Activated naive CD4-positive, alpha-beta T cell treated with anti-CD3 and anti-CD28 coated beads for 36 hours (primary cell): ENCODE measurements at regions of chr11 and their contacts with region 1.

Region 1: DNA sequence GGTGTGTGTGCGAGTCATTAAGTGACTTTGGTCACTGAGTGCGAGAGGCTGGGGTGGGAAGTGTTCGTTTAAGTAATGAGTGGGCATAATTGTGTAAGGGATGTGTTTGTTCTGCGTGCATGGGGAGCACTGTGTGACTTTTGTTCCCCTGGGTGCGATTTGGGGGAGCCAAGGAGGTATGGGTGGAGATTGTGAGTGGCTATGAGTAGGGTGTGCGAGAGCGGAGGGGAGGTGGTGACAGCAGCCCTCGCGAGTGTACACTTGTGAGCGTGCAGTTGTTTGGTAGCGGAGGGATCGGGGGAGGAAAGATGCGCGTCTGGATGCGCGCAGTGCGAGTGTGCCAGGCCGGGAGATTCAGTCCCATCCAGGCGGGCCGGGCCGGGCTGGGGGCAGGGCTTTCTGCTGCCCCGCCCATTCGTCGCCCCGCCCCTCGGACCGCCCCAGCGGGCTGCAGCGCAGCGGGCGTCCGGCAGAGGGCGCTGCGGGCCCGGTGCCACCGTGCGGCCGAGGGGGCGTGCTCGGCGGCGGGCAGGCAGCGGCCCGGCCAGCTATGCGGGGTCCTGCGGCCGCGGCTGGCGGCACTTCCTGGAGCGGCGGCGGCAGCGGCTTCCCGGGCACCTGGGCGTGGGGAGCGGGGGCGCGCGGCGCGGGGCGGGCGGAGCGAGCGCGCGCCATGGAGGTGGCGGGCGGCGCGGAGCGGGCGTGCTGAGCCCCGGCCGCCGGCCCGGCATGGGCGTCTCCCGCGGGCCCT is at the start of gene DGKZ:
- DNase-seq: peak; percentile 86
- H3K4me3 Mint-ChIP-seq: peak within 1 kb of the TSS; percentile 84
- H3K27ac Mint-ChIP-seq: peak within 1 kb of the TSS; percentile 92
- H3K4me1 Mint-ChIP-seq: peaks cover 80% of the 10 kb centered on the region
- H3K27me3 Mint-ChIP-seq: no peaks in the 10 kb centered on the region
- total RNA-seq, gene DGKZ: 82.9 to 89.2 TPM

Region 2: DNA sequence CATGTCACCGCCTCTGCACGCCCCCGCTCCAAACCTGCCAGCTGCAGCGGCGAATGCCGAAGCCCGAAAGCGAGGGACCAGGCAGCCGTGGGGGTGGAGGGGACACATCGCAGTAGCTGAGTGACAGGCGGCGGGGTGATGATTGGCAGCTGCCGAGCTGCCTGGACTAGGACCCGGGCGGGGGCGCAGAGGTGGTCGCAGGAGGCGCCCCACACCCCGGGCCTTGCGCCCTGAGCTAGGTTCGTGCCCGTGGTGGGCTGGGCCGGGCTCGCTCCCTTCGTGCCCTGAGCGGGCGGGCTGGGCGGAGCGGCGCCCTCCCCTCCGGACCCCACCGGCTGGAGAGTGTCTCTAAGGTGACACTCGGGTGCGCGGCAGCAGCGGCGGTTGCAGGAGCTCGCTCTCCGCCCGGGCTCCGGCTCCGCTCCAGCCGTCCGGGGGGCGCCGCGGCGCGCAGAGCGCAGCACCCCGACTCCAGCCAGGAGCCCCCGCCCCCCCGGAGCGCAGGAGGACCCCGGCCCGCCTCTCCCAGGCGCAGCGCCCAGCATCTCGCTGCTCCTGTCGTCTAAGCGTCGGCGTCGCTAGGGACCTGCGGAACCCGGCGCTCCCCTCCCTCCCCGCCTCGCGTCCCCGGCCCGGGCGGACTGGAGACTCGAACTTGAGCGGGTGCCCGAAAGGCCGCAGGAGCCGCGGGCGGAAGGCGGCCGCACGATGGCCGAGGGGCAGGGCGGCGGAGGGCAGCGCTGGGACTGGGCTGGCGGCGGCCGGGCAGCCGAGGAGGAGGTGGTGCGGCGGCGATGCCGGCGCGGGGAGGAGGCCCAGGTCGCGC is 14.3 kb before region 1 on chr11:
- CTCF ChIA-PET with region 1: interaction called, 148 read pairs
- intact Hi-C with region 1: loop called (anchors 1 kb)
- DNase-seq: peak; percentile 62
- H3K4me3 Mint-ChIP-seq: peak overlapping the region; percentile 80
- H3K27ac Mint-ChIP-seq: no peak overlapping the region
- H3K4me1 Mint-ChIP-seq: peaks cover 76% of the 10 kb centered on the region
- H3K27me3 Mint-ChIP-seq: no peaks in the 10 kb centered on the region

Region 3: GRCh38 chr11:46361283-46362155 is 14.5 kb after region 1 on chr11:
- CTCF ChIA-PET with region 1: interaction called, 368 read pairs
- intact Hi-C with region 1: loop called (anchors 1 kb)
- DNase-seq: peak; percentile 87
- H3K4me3 Mint-ChIP-seq: peak overlapping the region; percentile 78
- H3K27ac Mint-ChIP-seq: peak overlapping the region; percentile 95
- H3K4me1 Mint-ChIP-seq: peaks cover 58% of the 10 kb centered on the region
- H3K27me3 Mint-ChIP-seq: no peaks in the 10 kb centered on the region